ENCODE measurements at regions of chr19 and their contacts with region 1.

Region 1: GRCh38 chr19:16185123-16185767 is at the start of gene FAM32A:
- DNase-seq: peak; percentile 96 to 100 (median 99)
- H3K4me3 ChIP-seq: peak within 1 kb of the TSS; percentile 96
- H3K4me3 Mint-ChIP-seq: peak within 1 kb of the TSS; percentile 95 to 100 (median 98)
- H3K27ac ChIP-seq: peak within 1 kb of the TSS; percentile 74
- H3K27ac Mint-ChIP-seq: peak within 1 kb of the TSS; percentile 80 to 98 (median 96)
- H3K4me1 ChIP-seq: peaks cover 24% of the 10 kb centered on the region
- H3K4me1 Mint-ChIP-seq: peaks cover 30 to 50% (median 37%) of the 10 kb centered on the region in 3 donors
- H3K27me3 ChIP-seq: no peaks in the 10 kb centered on the region
- H3K27me3 Mint-ChIP-seq: peaks cover 0 to 2% of the 10 kb centered on the region in 2 donors
- total RNA-seq, gene FAM32A: 62.4 to 68.3 TPM

Region 2: DNA sequence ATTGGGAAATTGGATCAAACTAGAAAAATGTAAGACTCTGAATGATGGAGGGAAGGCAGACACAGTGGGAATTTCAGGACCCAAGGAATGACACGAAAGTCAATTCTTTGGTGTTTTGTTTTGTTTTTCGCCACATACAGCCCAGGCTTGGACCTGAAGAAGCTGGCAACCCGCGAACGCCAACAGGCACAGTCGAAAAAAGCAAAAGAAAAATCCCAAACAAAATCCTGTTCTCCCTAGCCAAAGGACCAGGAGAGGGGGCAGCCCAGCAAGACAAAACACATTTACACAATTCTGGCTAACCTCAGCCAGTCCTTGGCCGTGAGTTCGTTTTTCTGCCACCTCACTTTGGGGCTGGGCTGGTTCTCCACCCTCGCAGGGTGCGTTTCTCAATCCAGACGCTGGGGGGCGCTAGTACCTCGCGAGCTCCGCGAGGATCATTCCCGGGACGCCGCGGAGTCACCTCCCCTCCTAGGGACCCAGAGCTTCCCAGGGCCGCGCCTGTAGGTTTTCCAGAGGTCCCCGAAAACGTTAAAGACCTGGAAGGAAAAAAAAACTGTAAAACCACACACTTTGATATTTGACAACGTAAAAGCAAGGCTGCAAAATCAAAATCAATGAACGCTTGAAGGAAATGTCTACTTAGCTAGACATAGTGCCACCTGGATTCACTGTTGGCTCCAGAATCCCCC is 143.8 kb before region 1 on chr19:
- CTCF ChIA-PET with region 1: interaction called, 26 read pairs
- POLR2A ChIA-PET with region 1: interaction called, 5 read pairs
- DNase-seq: peak; percentile 58 to 80 (median 67)
- H3K4me3 ChIP-seq: no peak overlapping the region
- H3K4me3 Mint-ChIP-seq: peak overlapping the region in 4 of 7 donors; percentile 31 to 50 (median 46)
- H3K27ac ChIP-seq: no peak overlapping the region
- H3K27ac Mint-ChIP-seq: no peak overlapping the region
- H3K4me1 ChIP-seq: peaks cover 9% of the 10 kb centered on the region
- H3K4me1 Mint-ChIP-seq: peaks cover 7 to 16% (median 14%) of the 10 kb centered on the region in 3 donors
- H3K27me3 ChIP-seq: no peaks in the 10 kb centered on the region
- H3K27me3 Mint-ChIP-seq: no peaks in the 10 kb centered on the region

Region 3: GRCh38 chr19:16095071-16095571 is 90.1 kb before region 1 on chr19:
- CTCF ChIA-PET with region 1: interaction called, 3 read pairs
- POLR2A ChIA-PET with region 1: interaction called, 10 read pairs
- DNase-seq: peak in 1 of 5 donors; percentile 62
- H3K4me3 ChIP-seq: no peak overlapping the region
- H3K4me3 Mint-ChIP-seq: no peak overlapping the region
- H3K27ac ChIP-seq: no peak overlapping the region
- H3K27ac Mint-ChIP-seq: peak overlapping the region; percentile 21 to 87 (median 70)
- H3K4me1 ChIP-seq: peaks cover 12% of the 10 kb centered on the region
- H3K4me1 Mint-ChIP-seq: peaks cover 14 to 19% (median 18%) of the 10 kb centered on the region in 3 donors
- H3K27me3 ChIP-seq: no peaks in the 10 kb centered on the region
- H3K27me3 Mint-ChIP-seq: no peaks in the 10 kb centered on the region

Region 4: GRCh38 chr19:16197622-16198369 is 12.6 kb after region 1 on chr19 and contains the start of gene AP1M1:
- CTCF ChIA-PET with region 1: interaction called, 11 read pairs
- POLR2A ChIA-PET with region 1: interaction called, 27 read pairs
- DNase-seq: peak; percentile 97 to 99 (median 99)
- H3K4me3 ChIP-seq: peak within 1 kb of the TSS; percentile 96
- H3K4me3 Mint-ChIP-seq: peak within 1 kb of the TSS; percentile 81 to 94 (median 88)
- H3K27ac ChIP-seq: peak within 1 kb of the TSS; percentile 93
- H3K27ac Mint-ChIP-seq: peak within 1 kb of the TSS; percentile 89 to 98 (median 97)
- H3K4me1 ChIP-seq: peaks cover 23% of the 10 kb centered on the region
- H3K4me1 Mint-ChIP-seq: peaks cover 31 to 51% (median 47%) of the 10 kb centered on the region in 3 donors
- H3K27me3 ChIP-seq: no peaks in the 10 kb centered on the region
- H3K27me3 Mint-ChIP-seq: no peaks in the 10 kb centered on the region
- total RNA-seq, gene AP1M1: 113 to 120 TPM

Region 5: GRCh38 chr19:16216744-16217670 is 31.8 kb after region 1 on chr19:
- CTCF ChIA-PET with region 1: no interaction called
- POLR2A ChIA-PET with region 1: no interaction called
- DNase-seq: peak in 2 of 5 donors; percentile 12 to 76
- H3K4me3 ChIP-seq: peak overlapping the region; percentile 45
- H3K4me3 Mint-ChIP-seq: peak overlapping the region in 5 of 7 donors; percentile 52 to 78 (median 57)
- H3K27ac ChIP-seq: no peak overlapping the region
- H3K27ac Mint-ChIP-seq: peak overlapping the region; percentile 54 to 91 (median 66)
- H3K4me1 ChIP-seq: peaks cover 43% of the 10 kb centered on the region
- H3K4me1 Mint-ChIP-seq: peaks cover 44 to 58% (median 54%) of the 10 kb centered on the region in 3 donors
- H3K27me3 ChIP-seq: no peaks in the 10 kb centered on the region
- H3K27me3 Mint-ChIP-seq: no peaks in the 10 kb centered on the region

Measured in CD8-positive, alpha-beta memory T cell (primary cell).